PC-9 (cell line): ENCODE measurements at regions of chr4 and their contacts with region 1.

Region 1: DNA sequence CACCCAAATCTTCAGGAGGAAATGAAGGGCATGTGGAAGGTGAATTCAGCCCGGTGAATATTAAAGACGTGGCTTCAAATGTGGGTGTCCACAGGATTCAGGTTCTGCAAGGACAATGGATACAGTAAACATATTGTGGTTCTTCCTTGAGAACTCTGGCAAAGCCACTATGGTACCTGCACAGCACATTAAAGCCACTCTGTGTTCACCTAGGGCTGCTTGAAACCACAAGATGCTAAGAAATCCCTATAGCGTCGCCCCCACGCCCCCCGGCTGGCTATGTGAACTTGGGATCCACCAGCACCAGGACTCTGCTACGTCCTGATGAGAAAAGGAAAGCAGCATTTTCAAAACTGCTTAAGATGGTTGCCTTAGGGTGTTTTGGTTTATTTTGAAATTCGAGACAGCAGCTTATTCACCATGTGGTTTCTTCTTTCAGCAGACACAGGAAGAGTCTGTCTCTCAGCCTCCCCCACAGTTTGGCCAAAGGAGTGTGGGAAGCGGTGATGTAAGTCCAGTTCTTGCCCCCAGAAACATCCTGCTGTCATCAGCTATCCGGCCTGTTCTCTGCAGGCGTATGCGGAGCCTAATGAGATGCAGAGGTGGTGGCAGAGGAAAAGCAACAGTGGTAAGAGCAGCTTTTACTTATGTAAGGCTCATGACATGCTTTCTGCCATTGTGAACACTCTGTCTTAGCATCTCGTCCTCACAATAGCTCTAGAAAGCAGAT is 111.5 kb downstream of the AFAP1 start:
- DNase-seq: peak; percentile 65 to 81
- H3K4me3 ChIP-seq: no peak overlapping the region
- H3K27ac ChIP-seq: peak overlapping the region; percentile 80
- H3K4me1 ChIP-seq: peaks cover 20% of the 10 kb centered on the region
- H3K27me3 ChIP-seq: no peaks in the 10 kb centered on the region
- CTCF ChIP-seq: no peak

Region 2: DNA sequence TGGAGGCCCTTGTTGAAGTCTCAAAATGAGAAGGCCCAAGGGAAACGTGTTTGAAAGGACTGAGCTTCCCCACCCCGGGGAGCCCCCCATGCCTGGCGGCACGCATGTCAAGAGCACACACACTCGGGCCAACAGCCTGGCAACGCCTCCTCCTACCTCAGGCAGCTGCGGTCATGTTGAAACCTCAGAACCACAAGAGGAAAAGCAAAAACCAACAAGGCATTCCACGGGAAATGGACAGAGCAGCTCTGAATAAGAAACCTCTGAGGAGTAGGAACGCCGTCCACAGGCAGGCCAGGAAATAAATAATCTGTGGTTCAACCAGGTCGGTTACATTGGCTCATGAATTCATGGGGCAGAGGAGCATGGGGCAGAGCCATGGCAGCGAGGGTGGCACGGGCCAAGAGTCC is 207.2 kb after region 1 on chr4:
- CTCF ChIA-PET with region 1: no interaction called
- POLR2A ChIA-PET with region 1: interaction called, 14 read pairs
- intact Hi-C with region 1: no loop called
- DNase-seq: no peak
- H3K4me3 ChIP-seq: no peak overlapping the region
- H3K27ac ChIP-seq: no peak overlapping the region
- H3K4me1 ChIP-seq: no peaks in the 10 kb centered on the region
- H3K27me3 ChIP-seq: no peaks in the 10 kb centered on the region
- CTCF ChIP-seq: no peak

Region 3: GRCh38 chr4:8123389-8123788 is 295.2 kb after region 1 on chr4:
- CTCF ChIA-PET with region 1: no interaction called
- POLR2A ChIA-PET with region 1: no interaction called
- intact Hi-C with region 1: no loop called
- DNase-seq: no peak
- H3K4me3 ChIP-seq: no peak overlapping the region
- H3K27ac ChIP-seq: no peak overlapping the region
- H3K4me1 ChIP-seq: no peaks in the 10 kb centered on the region
- H3K27me3 ChIP-seq: no peaks in the 10 kb centered on the region
- CTCF ChIP-seq: no peak